Prostate gland (tissue), 2 donors: ENCODE measurements at regions of chr12 and their contacts with region 1.

Region 1: GRCh38 chr12:55188974-55189556 is 31.8 kb upstream of the OR10A7 start:
- DNase-seq: peak; percentile 60
- H3K4me3 ChIP-seq: no peak overlapping the region
- H3K27ac ChIP-seq: no peak overlapping the region
- H3K4me1 ChIP-seq: no peaks in the 10 kb centered on the region
- H3K27me3 ChIP-seq: no peaks in the 10 kb centered on the region
- CTCF ChIP-seq: peak; percentile 33 to 76 (median 74)
- POLR2A ChIP-seq: no peak

Region 2: DNA sequence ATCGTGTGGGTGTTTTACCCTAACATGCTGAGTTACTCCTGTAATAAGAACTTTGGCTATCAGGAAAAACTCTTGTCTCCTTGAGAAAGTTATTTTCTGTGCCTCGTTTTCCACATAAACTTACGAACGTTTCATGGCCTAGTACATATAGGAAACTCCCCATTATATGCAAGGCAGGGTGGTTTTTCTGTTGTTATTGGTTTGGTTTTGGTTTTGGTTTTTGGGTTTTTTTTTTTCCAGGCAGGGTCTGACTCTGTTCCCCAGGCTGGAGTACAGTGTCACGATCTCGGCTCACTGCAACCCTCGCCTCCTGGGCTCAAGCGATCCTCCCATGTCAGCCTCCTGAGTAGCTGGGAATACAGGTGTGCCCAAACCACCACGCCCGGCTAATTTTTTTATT is 146.9 kb after region 1 on chr12:
- intact Hi-C with region 1: no loop called
- DNase-seq: no peak
- H3K4me3 ChIP-seq: no peak overlapping the region
- H3K27ac ChIP-seq: no peak overlapping the region
- H3K4me1 ChIP-seq: no peaks in the 10 kb centered on the region
- H3K27me3 ChIP-seq: no peaks in the 10 kb centered on the region
- CTCF ChIP-seq: no peak
- POLR2A ChIP-seq: no peak

Region 3: GRCh38 chr12:55619354-55620138 is 430.5 kb after region 1 on chr12:
- intact Hi-C with region 1: loop called (anchors 1 kb)
- DNase-seq: peak; percentile 63
- H3K4me3 ChIP-seq: no peak overlapping the region
- H3K27ac ChIP-seq: no peak overlapping the region
- H3K4me1 ChIP-seq: no peaks in the 10 kb centered on the region
- H3K27me3 ChIP-seq: no peaks in the 10 kb centered on the region
- CTCF ChIP-seq: peak; percentile 58 to 90 (median 84)
- POLR2A ChIP-seq: no peak